ENCODE measurements at regions of chr15 and their contacts with region 1.

Region 1: DNA sequence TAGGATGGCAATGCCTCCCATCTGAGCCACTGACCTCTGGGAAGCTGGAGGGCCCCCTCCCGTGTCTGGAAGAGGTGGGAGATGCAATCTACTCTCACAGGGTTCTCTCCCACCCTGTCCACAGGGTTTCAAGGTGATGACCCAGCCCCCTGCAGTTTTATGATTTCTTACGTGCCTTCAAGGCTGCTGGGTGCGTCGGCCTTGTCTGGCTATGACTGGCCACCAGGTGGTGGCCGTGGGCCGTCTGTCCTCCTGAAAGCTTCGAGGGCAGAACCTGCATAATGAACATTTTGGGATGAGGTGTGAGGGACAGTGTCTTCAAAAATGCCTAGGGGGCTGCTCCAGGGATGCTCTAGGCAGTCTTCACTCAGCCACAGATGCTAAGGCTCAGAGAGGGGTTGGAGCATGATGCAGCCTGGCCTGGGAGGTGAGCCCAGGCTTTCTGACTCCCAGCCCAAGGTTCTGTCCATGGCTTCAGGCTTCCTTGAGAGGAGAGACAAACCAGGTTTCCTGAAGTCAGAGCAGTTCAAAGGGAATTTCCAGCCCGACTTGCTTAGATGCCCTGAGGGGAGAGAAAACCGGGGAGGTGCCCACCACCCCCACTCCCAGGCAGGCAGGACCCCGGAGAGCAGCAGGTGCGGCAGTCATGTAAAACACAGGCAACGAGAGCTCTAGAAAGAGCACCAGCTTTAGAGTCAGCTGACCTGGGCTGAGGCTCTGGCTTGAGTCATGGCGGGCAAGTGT is 18.7 kb downstream of the ISG20 start:
- H3K4me3 ChIP-seq: no peak overlapping the region
- H3K27ac ChIP-seq: no peak overlapping the region
- H3K4me1 ChIP-seq: no peaks in the 10 kb centered on the region
- CTCF ChIP-seq: peak; percentile 82

Region 2: GRCh38 chr15:88638626-88639372 is 18.7 kb before region 1 on chr15 and contains the start of gene ISG20:
- CTCF ChIA-PET with region 1: interaction called, 16 read pairs
- POLR2A ChIA-PET with region 1: interaction called, 3 read pairs
- H3K4me3 ChIP-seq: peak within 1 kb of the TSS; percentile 29
- H3K27ac ChIP-seq: peak within 1 kb of the TSS; percentile 61
- H3K4me1 ChIP-seq: peaks cover 6% of the 10 kb centered on the region; the same call in 1 of the 2 replicates
- CTCF ChIP-seq: peak; percentile 87

Region 3: DNA sequence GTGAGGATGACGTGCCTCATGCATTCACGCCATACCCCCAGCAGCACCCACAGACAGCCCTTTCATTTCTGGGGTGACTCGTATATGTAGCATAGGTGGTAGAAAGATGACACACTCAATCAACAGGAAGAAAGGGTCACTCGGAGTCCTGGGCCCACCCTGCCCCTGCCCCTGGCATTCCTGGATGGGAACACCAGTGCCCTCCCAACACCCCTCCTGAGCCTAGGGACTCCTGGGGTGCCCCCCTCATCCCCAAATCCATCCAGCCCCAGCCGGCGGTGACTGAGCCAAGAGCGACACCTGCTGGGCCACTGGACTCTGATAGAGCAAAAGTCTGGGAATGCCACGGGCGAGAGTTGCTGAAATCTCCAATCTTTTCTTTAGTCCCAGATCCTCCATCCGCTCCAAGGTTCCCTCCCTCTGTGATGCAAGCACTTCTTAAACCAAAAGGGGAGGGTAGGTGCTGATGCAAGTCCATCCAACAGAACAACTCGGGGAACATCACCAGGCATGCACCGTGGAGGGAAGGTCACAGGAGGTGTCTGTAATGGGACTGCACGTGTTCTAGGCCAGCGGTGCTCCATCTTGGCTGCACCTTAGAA is 176.8 kb after region 1 on chr15:
- CTCF ChIA-PET with region 1: interaction called, 81 read pairs
- POLR2A ChIA-PET with region 1: interaction called, 3 read pairs
- H3K4me3 ChIP-seq: no peak overlapping the region
- H3K27ac ChIP-seq: no peak overlapping the region
- H3K4me1 ChIP-seq: no peaks in the 10 kb centered on the region
- CTCF ChIP-seq: peak; percentile 67; the same call in 1 of the 2 replicates

Measured in HEK293 (cell line).